Posterior vena cava (tissue), 2 donors: ENCODE measurements at regions of chr9 and their contacts with region 1.

Region 1: GRCh38 chr9:135085830-135086546 is 1.5 kb upstream of the OLFM1 start:
- DNase-seq: peak; percentile 92

Region 2: GRCh38 chr9:134781591-134782294 is 304.2 kb before region 1 on chr9:
- intact Hi-C with region 1: loop called in 1 of 2 experiments (anchors 10 kb)
- DNase-seq: no peak

Region 3: GRCh38 chr9:135075234-135076142 is 10.5 kb before region 1 on chr9:
- intact Hi-C with region 1: no loop called
- DNase-seq: peak; percentile 90

Region 4: GRCh38 chr9:135241381-135242048 is 155.5 kb after region 1 on chr9:
- intact Hi-C with region 1: no loop called
- DNase-seq: peak; percentile 47

Region 5: GRCh38 chr9:135343837-135344522 is 258.0 kb after region 1 on chr9:
- intact Hi-C with region 1: loop called (anchors 2 kb)
- DNase-seq: no peak

Region 6: DNA sequence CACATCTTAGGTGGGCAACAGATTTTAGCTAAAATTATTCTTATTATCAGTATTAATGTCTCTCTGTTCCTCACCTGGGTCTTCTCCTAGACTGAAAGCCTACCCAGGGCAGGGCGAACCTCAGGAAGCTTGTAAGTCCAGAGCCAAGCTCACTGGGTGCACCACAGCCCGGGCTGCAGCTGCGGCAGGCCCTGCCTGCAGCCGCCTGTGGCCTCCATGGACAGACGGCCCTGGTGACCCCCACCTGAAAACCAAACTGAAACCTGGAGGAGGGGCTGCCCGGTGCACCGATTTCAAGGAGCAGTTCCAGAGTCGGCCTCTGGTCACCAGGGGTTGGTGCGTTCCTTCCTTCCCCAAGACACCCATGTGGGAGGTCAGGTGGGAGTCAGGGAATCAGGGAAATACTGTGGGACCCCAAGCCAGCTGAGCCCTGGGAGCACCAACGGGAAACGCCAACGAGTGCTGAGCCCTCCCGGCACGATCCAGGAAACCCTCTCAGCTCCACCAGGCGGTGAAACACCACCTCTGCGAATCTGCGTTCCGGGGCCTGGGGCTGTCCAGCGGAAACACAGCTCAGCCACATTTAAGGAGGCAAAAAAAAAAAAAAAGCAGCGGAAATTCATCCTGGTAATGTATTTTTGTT is 325.0 kb after region 1 on chr9:
- intact Hi-C with region 1: loop called (anchors 2 to 5 kb)
- DNase-seq: peak; percentile 62